ENCODE measurements at regions of chr11 and their contacts with region 1.

Region 1: DNA sequence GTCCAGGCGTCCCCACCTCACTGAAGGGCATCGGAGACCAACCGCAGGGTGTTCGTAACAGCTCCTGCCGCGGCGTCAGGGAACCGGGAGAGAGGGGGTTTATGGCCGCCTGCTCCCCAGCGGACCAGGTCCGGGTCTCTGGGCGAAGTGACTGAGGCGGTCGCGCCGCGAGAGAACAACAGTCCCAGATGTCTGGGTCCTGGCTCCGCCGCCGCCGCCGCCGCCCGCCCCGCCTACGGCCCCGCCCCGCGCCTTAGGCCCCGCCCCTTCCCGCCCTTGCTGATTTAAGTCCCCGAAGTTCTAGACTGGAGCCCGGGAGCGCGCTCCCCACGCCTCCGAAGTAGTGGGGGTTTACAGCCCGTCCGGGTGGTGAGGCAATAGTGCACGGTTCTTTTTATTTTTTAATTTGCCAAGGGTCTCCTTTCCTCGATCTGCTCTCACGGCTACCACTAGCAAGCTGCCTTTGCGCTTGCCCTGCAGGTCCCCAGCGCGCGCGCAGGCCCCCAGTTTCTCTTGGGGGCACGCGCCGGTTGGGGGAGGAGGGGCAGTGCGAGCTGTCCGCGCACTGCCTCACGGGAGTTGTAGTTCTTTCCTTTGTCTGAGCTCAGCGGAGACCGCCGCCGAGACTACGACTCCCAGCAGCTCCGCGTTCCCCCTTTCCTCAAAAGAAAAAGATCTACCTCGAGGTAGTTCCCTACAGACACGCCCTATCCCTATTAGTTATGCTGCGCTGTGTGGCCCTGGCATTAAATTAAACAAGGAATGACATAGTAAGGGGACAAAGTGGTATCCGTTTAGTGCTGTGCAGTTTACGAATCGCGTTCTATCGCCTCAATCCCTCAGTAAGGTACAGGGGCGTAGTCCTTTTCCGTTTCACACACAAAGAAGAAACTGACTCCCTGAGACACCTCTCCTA is at the start of gene PGM2L1:
- DNase-seq: peak; percentile 97
- H3K4me3 ChIP-seq: peak within 1 kb of the TSS; percentile 85 to 89 (median 86)
- H3K27ac ChIP-seq: peak within 1 kb of the TSS; percentile 89 to 93 (median 92)
- H3K4me1 ChIP-seq: peaks cover 0 to 7% (median 6%) of the 10 kb centered on the region in 4 donors
- H3K27me3 ChIP-seq: no peaks in the 10 kb centered on the region
- CTCF ChIP-seq: no peak
- EP300 ChIP-seq: peak in 1 of 4 donors; percentile 13
- POLR2A ChIP-seq: peak in 1 of 2 donors; percentile 24
- total RNA-seq, gene PGM2L1: 7.6 to 13.4 (median 8.9) TPM

Region 2: DNA sequence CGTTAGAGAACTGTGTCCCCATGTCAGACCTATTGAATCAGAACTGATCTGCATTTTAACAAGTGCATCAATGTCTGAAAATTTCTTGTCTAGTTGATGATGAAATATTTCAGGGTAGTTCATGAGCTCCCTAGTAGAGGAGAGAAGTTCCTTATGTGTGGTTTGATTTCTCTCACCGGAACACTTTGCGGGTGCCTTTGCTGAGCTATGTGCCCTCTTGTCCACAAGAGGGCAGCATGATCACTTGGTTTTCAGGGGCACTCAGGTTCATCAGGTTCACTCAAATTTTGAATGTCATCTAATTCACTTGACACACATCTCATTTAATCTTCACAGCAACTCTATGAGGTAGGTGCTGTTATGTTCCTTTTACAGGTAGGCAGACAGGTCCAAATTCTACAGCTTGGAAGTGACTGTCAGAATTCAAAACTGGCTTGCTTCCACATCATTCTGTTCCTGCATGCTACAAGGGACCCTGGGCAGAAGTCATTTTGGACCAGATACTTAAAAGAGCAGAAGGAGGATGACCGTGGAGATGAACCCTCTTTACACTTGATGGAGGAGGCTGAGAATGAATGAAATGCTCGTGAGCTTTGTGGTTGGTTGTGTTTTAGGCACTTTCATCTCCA is 142.6 kb before region 1 on chr11:
- intact Hi-C with region 1: loop called (anchors 5 kb)
- DNase-seq: no peak
- H3K4me3 ChIP-seq: no peak overlapping the region
- H3K27ac ChIP-seq: no peak overlapping the region
- H3K4me1 ChIP-seq: peaks cover 0 to 19% (median 18%) of the 10 kb centered on the region in 4 donors
- H3K27me3 ChIP-seq: no peaks in the 10 kb centered on the region
- CTCF ChIP-seq: peak; percentile 62 to 90 (median 86)
- EP300 ChIP-seq: no peak
- POLR2A ChIP-seq: no peak

Region 3: DNA sequence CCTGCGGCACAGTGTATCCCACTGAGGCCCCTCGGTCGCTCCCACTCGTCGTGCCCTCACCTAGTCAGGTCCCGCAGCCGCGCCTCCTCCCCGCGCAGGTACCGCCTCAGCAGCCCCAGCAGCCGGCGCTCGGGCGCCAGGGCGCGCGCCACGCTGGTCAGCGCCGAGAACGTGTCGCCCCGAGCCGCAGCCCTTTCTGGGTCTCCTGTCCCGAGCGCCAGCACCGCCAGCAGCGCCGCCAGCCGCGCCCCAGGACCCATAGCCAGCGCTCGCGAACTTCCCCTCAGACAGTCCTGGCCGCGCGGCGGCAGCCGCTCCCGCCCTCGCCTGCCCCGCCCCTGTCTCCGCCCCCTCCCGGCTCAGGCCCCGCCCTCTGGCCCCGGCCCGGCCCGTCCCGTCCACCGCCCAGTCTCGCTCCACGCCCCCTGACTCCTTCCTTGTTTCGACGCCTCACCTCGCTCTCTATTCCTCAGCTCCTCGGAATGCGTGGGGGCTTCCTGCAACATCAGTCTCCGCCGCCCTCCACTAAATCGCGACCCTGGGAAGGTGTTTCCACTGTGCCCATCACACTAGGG is 87.1 kb before region 1 on chr11 and contains the start of gene P4HA3:
- intact Hi-C with region 1: no loop called
- DNase-seq: peak; percentile 81
- H3K4me3 ChIP-seq: peak within 1 kb of the TSS; percentile 20 to 65 (median 52)
- H3K27ac ChIP-seq: peak within 1 kb of the TSS in 1 of 4 donors; percentile 67
- H3K4me1 ChIP-seq: peaks cover 0 to 22% (median 15%) of the 10 kb centered on the region in 4 donors
- H3K27me3 ChIP-seq: peaks cover 0 to 4% (median 0%) of the 10 kb centered on the region in 3 donors
- CTCF ChIP-seq: no peak
- EP300 ChIP-seq: no peak
- POLR2A ChIP-seq: no peak
- total RNA-seq, gene P4HA3: 0.82 to 11.9 (median 1.4) TPM

Region 4: DNA sequence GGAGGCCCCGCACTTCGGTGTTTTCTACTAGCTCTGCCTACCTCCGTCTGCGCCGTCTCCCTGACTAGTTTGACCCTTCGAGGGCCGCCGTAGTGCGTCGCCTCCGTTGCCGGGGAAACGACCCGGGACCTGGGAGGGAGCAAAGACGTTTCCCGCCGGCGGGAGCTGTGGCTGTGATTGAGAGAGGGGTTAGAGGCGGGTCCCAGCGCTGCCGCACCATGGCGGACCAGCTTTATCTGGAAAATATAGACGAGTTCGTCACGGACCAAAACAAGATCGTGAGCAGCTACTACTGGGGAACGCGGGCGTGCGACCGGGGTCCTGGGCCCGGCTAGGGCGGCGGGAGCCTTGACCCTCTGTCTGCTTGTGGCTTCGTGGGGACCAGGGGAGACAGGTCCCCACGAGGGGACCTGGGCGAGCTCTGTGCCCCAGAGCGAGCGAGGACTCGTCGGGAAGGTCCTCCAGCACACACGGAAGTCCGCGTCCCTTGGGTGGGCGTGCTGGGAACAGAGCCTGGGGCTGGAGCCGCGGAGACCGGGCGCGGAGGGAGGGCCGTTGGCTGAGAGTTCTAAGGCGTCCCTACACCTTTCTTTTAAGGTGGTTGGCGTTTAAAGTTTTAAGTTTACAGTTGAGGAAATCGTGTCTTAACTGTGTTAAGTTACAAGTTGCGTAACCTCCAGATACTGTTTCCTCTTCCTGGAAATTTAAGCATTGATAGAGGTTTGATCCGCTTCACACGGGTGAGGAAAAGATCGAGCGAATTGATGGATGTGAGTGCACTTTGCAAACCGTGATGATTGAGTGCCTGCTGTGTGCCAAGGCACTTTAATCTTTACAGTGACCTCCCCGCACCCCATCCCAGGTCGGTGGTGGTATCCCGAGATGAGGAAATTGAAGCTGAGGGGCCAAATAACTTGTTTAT is 194.2 kb after region 1 on chr11 and contains the start of gene POLD3:
- intact Hi-C with region 1: loop called (anchors 5 kb)
- DNase-seq: peak; percentile 95
- H3K4me3 ChIP-seq: peak within 1 kb of the TSS; percentile 84 to 93 (median 88)
- H3K27ac ChIP-seq: peak within 1 kb of the TSS; percentile 77 to 82 (median 80)
- H3K4me1 ChIP-seq: peaks cover 0 to 21% (median 15%) of the 10 kb centered on the region in 4 donors
- H3K27me3 ChIP-seq: no peaks in the 10 kb centered on the region
- CTCF ChIP-seq: no peak
- EP300 ChIP-seq: no peak
- POLR2A ChIP-seq: no peak
- total RNA-seq, gene POLD3: 11.2 to 23.0 (median 14.8) TPM

Region 5: DNA sequence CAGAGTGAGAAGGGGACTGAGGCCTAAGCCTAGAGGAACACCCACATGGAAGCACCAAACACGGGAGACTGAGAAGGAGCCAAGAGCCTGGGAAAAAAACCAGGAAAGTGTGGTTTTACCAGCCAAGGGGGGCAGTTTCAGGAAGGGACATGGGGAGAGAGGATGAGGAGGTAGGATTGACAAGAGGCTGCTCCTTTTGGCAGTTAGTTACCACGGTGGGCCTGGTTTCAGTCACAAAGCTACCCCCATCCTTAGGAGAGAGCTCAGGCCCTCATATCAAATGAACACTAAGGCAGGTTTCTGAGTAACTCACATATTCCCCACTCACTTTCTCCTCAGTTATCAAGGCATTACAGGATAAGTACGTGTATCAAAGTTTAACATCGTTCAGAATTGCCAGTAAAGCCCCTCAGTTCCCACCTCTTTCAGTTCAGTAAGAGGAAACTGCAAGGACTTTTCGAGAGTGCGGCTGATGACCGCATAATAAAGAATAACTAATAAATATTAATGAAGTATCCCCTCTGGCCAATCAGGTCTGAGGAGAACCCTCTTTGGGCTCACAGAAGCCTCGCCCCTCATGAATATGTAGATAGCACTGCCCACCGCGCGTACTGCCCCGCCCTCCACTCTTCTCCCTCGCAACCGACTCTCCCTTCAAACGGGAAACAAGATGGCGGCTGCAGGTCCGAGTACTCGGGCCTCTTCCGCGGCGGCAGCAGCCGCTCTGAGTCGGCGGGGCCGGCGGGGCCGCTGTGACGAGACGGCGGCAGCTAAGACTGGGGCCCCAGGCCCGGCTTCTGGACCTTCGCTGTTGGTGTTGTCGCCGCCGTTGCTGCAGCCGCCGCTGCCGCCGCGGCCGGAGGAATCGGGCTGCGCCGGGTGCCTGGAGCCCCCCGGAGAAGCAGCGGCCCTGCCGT is 350.0 kb after region 1 on chr11 and contains the start of gene RNF169:
- intact Hi-C with region 1: loop called (anchors 5 kb)
- DNase-seq: peak; percentile 98
- H3K4me3 ChIP-seq: peak within 1 kb of the TSS; percentile 77 to 97 (median 94)
- H3K27ac ChIP-seq: peak within 1 kb of the TSS; percentile 94 to 98 (median 96)
- H3K4me1 ChIP-seq: peaks cover 0 to 36% (median 31%) of the 10 kb centered on the region in 4 donors
- H3K27me3 ChIP-seq: no peaks in the 10 kb centered on the region
- CTCF ChIP-seq: no peak
- EP300 ChIP-seq: no peak
- POLR2A ChIP-seq: peak; percentile 42 to 53
- total RNA-seq, gene RNF169: 20.3 to 27.7 (median 22.5) TPM

Measured in sigmoid colon (tissue), 7 donors.